Right ventricle myocardium superior (tissue), 1 donor: ENCODE measurements at regions of chr9 and their contacts with region 1.

Region 1: GRCh38 chr9:18442629-18443491 is 31.1 kb upstream of the ADAMTSL1 start:
- DNase-seq: peak; percentile 75
- ATAC-seq: peak; percentile 80

Region 2: GRCh38 chr9:18255158-18255629 is 187.7 kb before region 1 on chr9:
- intact Hi-C with region 1: loop called (anchors 2 kb)
- DNase-seq: peak; percentile 83
- ATAC-seq: peak; percentile 95

Region 3: GRCh38 chr9:18362901-18363685 is 79.8 kb before region 1 on chr9:
- intact Hi-C with region 1: loop called (anchors 10 kb)
- DNase-seq: no peak
- ATAC-seq: peak; percentile 91

Region 4: GRCh38 chr9:18516965-18517364 is 74.1 kb after region 1 on chr9:
- intact Hi-C with region 1: no loop called
- DNase-seq: no peak
- ATAC-seq: no peak

Region 5: DNA sequence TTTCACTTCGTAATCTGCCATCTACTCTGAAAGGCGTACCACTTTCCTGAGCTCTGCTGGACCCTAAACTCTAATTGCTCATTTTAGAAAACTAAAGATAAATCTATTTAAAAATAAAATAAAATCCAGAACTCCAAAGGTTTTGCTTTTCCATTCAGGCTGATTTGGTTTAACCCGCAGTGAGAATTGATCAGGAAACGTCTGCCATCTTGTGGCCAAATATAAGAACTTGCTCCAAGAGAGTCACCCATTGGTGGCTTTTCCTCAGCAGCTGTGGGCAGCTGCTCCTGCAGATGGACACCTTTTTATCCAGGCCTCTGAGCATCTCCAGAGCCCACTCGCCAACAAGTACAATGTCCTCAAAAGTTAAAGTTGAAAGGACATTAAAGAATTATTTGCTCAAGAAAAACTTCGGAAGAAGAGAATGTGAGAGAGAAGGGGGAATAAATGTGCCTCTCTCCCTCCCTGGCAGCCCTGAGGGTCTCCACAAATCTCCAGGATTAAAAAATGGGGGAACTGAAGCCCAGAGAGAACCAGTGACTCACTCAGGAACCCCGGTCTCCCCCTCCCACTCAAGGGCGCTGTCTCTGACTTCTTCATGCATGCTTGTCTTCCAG is 586.1 kb after region 1 on chr9:
- intact Hi-C with region 1: loop called (anchors 10 kb)
- DNase-seq: no peak
- ATAC-seq: peak; percentile 75